Activated T-helper 1 cell treated with anti-CD3 and anti-CD28 coated beads, Interleukin-12 subunit alpha, Interleukin-12 subunit beta, Interleukin-2, Interleukin-4 antibody, amounts not matched to agents 30 ng/mL and 10 ng/mL and 1 ng/mL, durations not matched to agents 14 hours and 24 hours and 36 hours (primary cell): ENCODE measurements at regions of chr1 and their contacts with region 1.

Region 1: GRCh38 chr1:42576935-42577334 is 81.3 kb upstream of the PPIH start:
- DNase-seq: no peak
- H3K4me3 Mint-ChIP-seq: no peak overlapping the region
- H3K27ac Mint-ChIP-seq: no peak overlapping the region
- H3K4me1 Mint-ChIP-seq: no peaks in the 10 kb centered on the region
- H3K27me3 Mint-ChIP-seq: peaks cover 2% of the 10 kb centered on the region

Region 2: DNA sequence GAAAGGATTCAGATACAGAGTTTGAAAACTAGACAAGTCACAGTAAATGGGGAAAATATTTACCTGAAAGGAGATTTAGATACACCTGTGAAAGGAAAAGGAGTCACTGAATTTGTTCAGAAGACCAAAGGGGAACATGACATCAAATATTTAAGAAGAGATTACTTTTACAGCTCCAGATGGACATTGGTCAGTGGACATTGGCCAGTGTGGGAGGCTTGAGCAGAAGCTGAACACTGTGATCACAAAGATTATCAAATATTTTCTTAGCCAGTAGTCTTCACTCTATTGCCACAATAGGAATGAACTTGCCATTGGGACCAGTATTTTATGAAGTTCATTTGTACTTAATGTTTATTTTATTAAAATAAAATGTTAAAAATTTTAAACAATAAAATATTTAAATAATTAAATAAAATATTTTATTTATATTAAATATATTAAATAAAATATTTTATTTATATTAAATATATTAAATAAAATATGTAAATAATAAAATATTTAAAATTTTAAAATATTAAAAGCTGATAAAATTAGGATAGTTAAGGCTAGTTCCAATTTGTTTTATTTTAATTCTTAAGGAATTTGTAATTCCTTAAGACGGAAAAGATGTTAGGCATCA is 19.6 kb before region 1 on chr1:
- intact Hi-C with region 1: no loop called
- DNase-seq: no peak
- H3K4me3 Mint-ChIP-seq: no peak overlapping the region
- H3K27ac Mint-ChIP-seq: no peak overlapping the region
- H3K4me1 Mint-ChIP-seq: no peaks in the 10 kb centered on the region
- H3K27me3 Mint-ChIP-seq: peaks cover 6% of the 10 kb centered on the region

Region 3: DNA sequence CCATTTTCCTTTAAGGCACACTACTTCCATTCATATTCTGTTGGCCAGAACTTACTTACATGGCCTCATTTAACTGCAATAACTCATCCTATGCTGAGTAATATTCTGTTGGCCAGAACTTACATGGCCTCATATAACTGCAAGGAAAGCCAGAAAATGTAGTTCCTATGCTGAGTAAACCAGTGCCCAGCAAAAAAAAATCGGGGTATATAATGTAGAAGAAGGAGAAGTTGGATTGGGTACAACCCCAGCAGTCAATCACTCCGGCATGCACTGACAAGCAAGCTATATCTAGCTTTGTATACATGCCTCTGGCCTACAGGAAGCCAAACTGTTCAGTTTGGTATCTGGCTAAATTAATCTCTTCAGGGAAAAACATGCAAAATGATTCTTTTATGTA is 41.9 kb after region 1 on chr1:
- intact Hi-C with region 1: no loop called
- DNase-seq: no peak
- H3K4me3 Mint-ChIP-seq: no peak overlapping the region
- H3K27ac Mint-ChIP-seq: no peak overlapping the region
- H3K4me1 Mint-ChIP-seq: no peaks in the 10 kb centered on the region
- H3K27me3 Mint-ChIP-seq: peaks cover 2% of the 10 kb centered on the region

Region 4: GRCh38 chr1:42690477-42691156 is 113.7 kb after region 1 on chr1:
- intact Hi-C with region 1: loop called (anchors 2 kb)
- DNase-seq: no peak
- H3K4me3 Mint-ChIP-seq: no peak overlapping the region
- H3K27ac Mint-ChIP-seq: peak overlapping the region; percentile 16
- H3K4me1 Mint-ChIP-seq: peaks cover 94% of the 10 kb centered on the region
- H3K27me3 Mint-ChIP-seq: no peaks in the 10 kb centered on the region

Region 5: DNA sequence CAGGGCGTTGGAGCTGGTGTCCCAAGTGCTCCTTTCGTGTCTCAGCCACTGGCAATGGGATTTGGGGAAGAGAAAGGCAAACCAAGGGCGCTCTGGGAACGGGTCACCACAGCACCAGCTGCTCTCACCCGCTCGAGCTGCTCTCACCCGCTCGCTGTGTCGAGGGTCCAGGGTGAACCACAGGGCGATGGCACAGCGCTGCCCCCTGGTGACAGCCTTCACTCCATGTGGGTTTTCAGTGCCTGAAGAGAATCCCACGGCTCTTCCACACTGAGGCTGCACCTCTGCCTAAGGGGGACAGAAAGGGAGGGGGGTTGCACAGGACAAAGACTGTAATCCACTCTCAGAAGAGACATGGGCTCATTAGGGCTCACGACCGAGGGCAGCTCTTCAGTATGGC is 170.2 kb after region 1 on chr1:
- intact Hi-C with region 1: loop called (anchors 1 kb)
- DNase-seq: no peak
- H3K4me3 Mint-ChIP-seq: no peak overlapping the region
- H3K27ac Mint-ChIP-seq: no peak overlapping the region
- H3K4me1 Mint-ChIP-seq: no peaks in the 10 kb centered on the region
- H3K27me3 Mint-ChIP-seq: no peaks in the 10 kb centered on the region

Region 6: DNA sequence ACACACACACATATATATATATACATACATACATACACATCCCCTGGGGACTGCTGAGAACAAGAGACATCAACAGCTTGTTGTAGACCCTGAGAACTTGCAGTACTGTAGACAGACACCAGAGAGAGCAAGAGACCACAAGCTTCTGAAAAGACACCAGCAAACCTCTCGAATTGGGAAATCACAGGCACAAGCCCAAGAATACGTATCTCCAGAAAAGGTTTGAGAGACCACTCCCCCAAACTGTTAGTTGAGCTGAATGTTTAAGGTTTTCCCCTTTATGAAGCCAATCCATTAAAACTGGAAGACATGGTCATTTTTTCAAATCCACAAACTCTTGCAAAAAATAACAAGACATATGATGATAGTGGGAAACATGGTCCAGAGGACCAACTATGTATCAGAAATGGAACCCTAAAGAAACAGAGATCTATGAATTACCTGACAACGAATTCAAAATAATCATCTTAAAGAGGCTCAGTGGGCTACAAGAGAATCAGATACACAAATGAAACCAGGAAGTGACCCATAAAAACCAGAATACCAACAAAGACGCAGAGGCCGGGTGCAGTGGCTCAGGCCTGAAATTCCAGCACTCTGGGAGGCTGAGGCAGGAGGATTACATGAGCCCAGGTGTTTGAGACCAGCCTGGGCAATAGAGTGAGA is 336.6 kb after region 1 on chr1:
- intact Hi-C with region 1: loop called (anchors 2 kb)
- DNase-seq: peak; percentile 49
- H3K4me3 Mint-ChIP-seq: no peak overlapping the region
- H3K27ac Mint-ChIP-seq: no peak overlapping the region
- H3K4me1 Mint-ChIP-seq: peaks cover 7% of the 10 kb centered on the region
- H3K27me3 Mint-ChIP-seq: peaks cover 4% of the 10 kb centered on the region